Vagina (tissue), 2 donors: ENCODE measurements at regions of chr9 and their contacts with region 1.

Region 1: DNA sequence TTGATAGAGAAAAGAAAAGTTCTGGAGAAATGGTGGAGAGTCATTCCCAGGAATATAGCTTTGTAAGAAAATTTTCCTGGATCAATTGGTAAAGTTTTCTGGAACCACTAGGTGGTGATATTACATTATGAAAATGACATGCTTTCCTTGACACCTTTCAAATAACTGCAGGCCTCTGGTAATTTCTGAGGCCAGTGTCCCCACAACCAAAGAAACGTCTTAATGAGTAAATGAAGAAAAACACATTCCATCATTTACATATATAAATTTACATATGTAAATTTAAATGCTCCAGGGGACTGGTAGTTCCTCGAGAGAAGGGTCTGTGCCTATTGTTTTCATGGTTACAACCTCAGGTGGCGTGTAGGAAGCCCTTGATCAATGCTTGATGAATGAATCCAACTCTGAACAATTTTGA is 17.2 kb upstream of the RGS3 start:
- DNase-seq: no peak
- H3K4me3 ChIP-seq: no peak overlapping the region
- H3K27ac ChIP-seq: no peak overlapping the region
- H3K4me1 ChIP-seq: no peaks in the 10 kb centered on the region
- H3K27me3 ChIP-seq: no peaks in the 10 kb centered on the region
- CTCF ChIP-seq: peak; percentile 67 to 77 (median 74)
- POLR2A ChIP-seq: no peak

Region 2: GRCh38 chr9:113657703-113658544 is 211.6 kb after region 1 on chr9:
- intact Hi-C with region 1: loop called (anchors 5 kb)
- DNase-seq: no peak
- H3K4me3 ChIP-seq: no peak overlapping the region
- H3K27ac ChIP-seq: no peak overlapping the region
- H3K4me1 ChIP-seq: peaks cover 17% of the 10 kb centered on the region
- H3K27me3 ChIP-seq: no peaks in the 10 kb centered on the region
- CTCF ChIP-seq: peak; percentile 88 to 94 (median 92)
- POLR2A ChIP-seq: no peak